Activated CD4-positive, alpha-beta memory T cell treated with anti-CD3 and anti-CD28 coated beads for 36 hours (primary cell): ENCODE measurements at regions of chr4 and their contacts with region 1.

Region 1: GRCh38 chr4:99054428-99054994 is 34.1 kb downstream of the ADH5 start:
- DNase-seq: no peak
- H3K4me3 Mint-ChIP-seq: no peak overlapping the region
- H3K27ac Mint-ChIP-seq: peak overlapping the region; percentile 73
- H3K4me1 Mint-ChIP-seq: peaks cover 42% of the 10 kb centered on the region
- H3K27me3 Mint-ChIP-seq: no peaks in the 10 kb centered on the region

Region 2: DNA sequence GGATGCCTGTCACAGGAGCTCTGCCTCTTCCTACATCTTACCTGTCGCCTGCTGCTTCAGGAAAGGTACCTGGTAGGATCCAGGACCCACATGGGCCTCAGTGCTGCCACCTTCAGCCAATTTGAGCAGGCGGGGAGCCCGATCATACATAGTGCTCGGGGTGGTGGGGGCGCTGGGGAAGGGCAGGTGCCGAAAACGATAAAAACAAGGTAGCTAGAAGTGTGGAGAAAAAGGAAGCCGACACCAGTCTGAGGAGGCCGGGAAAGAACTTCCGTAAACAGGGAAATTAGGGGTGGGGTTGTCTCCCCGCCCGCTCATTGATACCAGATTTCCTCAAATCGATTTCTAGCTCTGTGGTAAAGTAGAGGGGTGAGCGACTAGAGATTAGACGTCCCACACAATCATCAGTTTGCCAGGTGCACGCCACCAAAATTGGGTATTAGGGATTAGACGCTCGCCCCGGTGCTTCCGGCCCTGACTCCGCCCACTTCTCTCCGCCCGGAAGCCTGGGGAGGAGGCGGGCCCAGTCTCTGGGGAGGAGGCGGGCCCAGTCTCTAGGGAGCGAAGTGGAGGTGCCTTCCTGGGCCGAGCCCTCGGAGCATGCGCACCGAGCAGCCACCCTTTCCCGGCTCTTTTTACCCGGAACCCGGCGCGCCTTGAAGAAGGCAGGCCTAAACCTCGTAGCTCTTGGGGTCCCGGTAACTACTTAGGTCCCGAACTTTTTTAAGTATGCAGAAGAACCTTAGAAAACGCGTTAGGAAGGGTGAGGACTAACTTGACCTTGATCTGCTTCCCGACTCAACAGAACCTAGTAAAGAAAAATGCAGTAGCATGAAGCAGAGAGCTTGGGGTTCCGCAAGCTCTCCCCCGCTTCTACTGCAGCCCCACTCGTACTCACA is 911.3 kb before region 1 on chr4 and contains the start of gene STPG2:
- CTCF ChIA-PET with region 1: interaction called, 3 read pairs
- POLR2A ChIA-PET with region 1: no interaction called
- intact Hi-C with region 1: loop called (anchors 5 kb)
- DNase-seq: peak; percentile 95
- H3K4me3 Mint-ChIP-seq: peak within 1 kb of the TSS; percentile 95
- H3K27ac Mint-ChIP-seq: peak within 1 kb of the TSS; percentile 98
- H3K4me1 Mint-ChIP-seq: peaks cover 20% of the 10 kb centered on the region
- H3K27me3 Mint-ChIP-seq: no peaks in the 10 kb centered on the region
- total RNA-seq, gene STPG2: not detected

Region 3: DNA sequence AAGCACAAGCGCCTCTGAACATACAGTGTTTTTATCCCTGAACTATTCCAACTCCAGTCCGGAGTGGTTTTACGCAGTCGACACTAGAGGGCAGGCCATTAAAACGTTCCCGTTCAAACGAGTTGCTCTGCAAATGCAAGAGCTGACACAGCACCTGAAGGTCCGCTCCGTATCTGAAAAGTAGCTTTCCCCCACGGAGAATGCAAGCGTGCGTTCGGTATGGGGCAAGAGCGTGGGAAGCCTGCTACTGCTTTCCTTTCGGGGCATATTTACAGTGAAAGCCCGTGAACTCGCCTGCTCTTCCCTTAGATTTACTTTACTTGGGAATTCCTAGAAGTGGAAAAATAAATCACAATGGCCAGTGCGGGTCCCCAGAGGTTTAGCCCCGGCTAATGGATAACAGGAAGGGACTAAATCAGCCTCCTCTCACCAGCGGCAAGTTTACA is 586.9 kb before region 1 on chr4:
- CTCF ChIA-PET with region 1: interaction called, 14 read pairs
- POLR2A ChIA-PET with region 1: no interaction called
- intact Hi-C with region 1: loop called (anchors 1 kb)
- DNase-seq: peak; percentile 82
- H3K4me3 Mint-ChIP-seq: peak overlapping the region; percentile 67
- H3K27ac Mint-ChIP-seq: no peak overlapping the region
- H3K4me1 Mint-ChIP-seq: peaks cover 27% of the 10 kb centered on the region
- H3K27me3 Mint-ChIP-seq: no peaks in the 10 kb centered on the region

Region 4: GRCh38 chr4:98864560-98864959 is 190.0 kb before region 1 on chr4:
- CTCF ChIA-PET with region 1: interaction called, 3 read pairs
- POLR2A ChIA-PET with region 1: interaction called, 3 read pairs
- intact Hi-C with region 1: loop called (anchors 5 kb)
- DNase-seq: peak; percentile 79
- H3K4me3 Mint-ChIP-seq: no peak overlapping the region
- H3K27ac Mint-ChIP-seq: peak overlapping the region; percentile 42
- H3K4me1 Mint-ChIP-seq: peaks cover 13% of the 10 kb centered on the region
- H3K27me3 Mint-ChIP-seq: no peaks in the 10 kb centered on the region

Region 5: DNA sequence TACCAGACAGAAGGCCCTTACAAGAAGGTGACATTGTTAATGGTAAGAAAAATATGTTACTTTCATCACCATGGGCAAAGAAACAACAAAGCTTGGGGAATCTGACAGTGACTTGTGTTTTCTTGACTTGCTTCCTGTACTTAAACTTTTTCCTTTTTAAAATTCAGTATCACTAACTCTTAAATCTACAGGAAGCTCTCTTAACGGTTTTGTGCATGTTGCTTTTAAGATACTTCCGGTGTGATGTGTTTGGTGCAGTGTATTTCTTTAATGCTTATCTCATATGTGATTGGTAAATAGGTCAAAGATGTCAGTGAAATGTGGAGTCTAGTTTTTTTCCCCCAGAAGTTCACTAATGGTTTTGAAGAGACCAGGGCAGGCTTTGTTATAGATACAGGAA is 11.2 kb before region 1 on chr4:
- CTCF ChIA-PET with region 1: interaction called, 5 read pairs
- POLR2A ChIA-PET with region 1: no interaction called
- intact Hi-C with region 1: loop called (anchors 1 kb)
- DNase-seq: no peak
- H3K4me3 Mint-ChIP-seq: no peak overlapping the region
- H3K27ac Mint-ChIP-seq: peak overlapping the region; percentile 82
- H3K4me1 Mint-ChIP-seq: peaks cover 17% of the 10 kb centered on the region
- H3K27me3 Mint-ChIP-seq: no peaks in the 10 kb centered on the region

Region 6: GRCh38 chr4:99156992-99157391 is 102.5 kb after region 1 on chr4:
- CTCF ChIA-PET with region 1: no interaction called
- POLR2A ChIA-PET with region 1: no interaction called
- intact Hi-C with region 1: no loop called
- DNase-seq: no peak
- H3K4me3 Mint-ChIP-seq: no peak overlapping the region
- H3K27ac Mint-ChIP-seq: no peak overlapping the region
- H3K4me1 Mint-ChIP-seq: no peaks in the 10 kb centered on the region
- H3K27me3 Mint-ChIP-seq: no peaks in the 10 kb centered on the region

Region 7: DNA sequence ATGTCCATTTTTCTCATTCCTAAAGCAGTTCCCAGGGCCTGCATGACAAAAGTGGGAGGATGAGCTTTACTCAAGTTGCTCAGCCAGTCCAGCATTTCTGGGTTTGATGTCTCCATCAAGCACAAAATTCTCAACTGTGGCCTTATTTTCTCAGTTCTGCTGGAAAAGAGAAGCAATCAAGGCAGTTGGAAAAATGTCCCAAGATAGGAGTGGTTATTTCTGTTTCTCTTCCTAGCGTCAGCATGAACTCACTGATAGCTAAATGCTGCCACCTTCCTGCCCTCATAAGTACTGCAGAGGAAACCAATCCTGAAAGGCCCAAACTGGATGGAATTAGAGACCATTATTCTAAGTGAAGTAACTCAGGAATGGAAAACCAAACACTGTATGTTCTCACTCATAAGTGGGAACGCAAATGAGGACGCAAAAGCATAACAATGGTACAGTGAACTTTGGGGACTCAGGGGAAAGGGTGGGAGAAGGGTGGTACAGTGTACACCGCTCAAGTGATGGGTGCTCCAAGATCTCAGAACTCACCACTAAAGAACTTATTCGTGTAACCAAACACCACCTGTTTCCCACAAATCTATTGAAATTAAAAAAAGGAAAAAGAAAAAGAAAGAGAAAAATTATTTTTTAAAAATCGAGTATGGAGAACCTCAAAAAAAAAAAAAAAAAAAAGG is 351.1 kb after region 1 on chr4:
- CTCF ChIA-PET with region 1: interaction called, 14 read pairs
- POLR2A ChIA-PET with region 1: no interaction called
- intact Hi-C with region 1: loop called (anchors 1 kb)
- DNase-seq: peak; percentile 66
- H3K4me3 Mint-ChIP-seq: no peak overlapping the region
- H3K27ac Mint-ChIP-seq: no peak overlapping the region
- H3K4me1 Mint-ChIP-seq: peaks cover 18% of the 10 kb centered on the region
- H3K27me3 Mint-ChIP-seq: peaks cover 2% of the 10 kb centered on the region